ENCODE measurements at regions of chr10 and their contacts with region 1.

Region 1: DNA sequence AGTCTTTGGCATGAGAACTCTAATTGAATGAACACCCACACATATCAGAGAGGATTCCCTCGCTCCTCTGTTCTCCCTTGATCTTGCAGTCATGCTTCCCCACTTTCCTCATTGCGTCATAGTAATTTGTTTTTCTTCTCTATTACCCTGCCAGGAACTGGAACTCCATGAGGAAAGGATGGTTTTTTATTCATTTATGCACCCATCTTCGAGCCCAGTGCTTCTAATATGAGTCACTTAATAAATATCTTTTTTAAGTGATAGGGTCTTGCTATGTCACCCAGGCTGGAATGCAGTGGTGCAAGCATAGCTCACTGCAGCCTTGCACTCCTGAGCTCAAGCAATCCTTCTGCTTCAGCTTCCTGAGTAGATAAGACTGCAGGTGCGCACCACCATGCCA is 83.5 kb downstream of the OTUD1 start:
- H3K4me3 Mint-ChIP-seq: no peak overlapping the region
- H3K27ac Mint-ChIP-seq: no peak overlapping the region
- H3K4me1 Mint-ChIP-seq: peaks cover 26% of the 10 kb centered on the region
- H3K27me3 Mint-ChIP-seq: no peaks in the 10 kb centered on the region

Region 2: DNA sequence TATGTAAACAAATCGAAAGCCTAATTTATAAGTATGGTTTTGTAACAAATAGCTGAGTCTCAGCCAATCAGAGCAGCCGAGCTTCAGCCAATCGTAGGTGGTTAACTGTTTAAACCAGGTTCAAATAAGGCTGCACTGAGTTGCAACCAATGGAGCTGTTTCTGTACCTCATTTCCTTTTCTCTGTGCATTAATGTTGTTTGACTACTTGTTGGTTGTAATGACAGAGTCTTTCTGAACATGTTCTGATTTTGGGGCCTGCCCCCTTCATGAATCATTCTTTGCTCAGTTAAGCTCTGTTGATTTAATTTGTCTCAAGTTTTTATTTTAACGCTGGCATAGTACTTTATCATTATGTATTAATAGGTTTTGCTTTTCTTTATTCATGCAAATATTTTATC is 68.9 kb before region 1 on chr10:
- intact Hi-C with region 1: loop called (anchors 5 kb)
- H3K4me3 Mint-ChIP-seq: no peak overlapping the region
- H3K27ac Mint-ChIP-seq: no peak overlapping the region
- H3K4me1 Mint-ChIP-seq: peaks cover 38% of the 10 kb centered on the region
- H3K27me3 Mint-ChIP-seq: no peaks in the 10 kb centered on the region

Measured in dendritic cell treated with granulocyte-macrophage colony-stimulating factor and Interleukin-4, amounts not matched to agents 40 ng/mL and 50 ng/mL, for 4 days (primary cell).